Left colon (tissue), 2 donors: ENCODE measurements at regions of chr3 and their contacts with region 1.

Region 1: GRCh38 chr3:183385698-183386613 is 42.5 kb downstream of the MCF2L2 start:
- DNase-seq: peak in 1 of 2 donors; percentile 60
- ATAC-seq: peak; percentile 86

Region 2: GRCh38 chr3:183122257-183122932 is 263.6 kb before region 1 on chr3:
- intact Hi-C with region 1: loop called (anchors 5 to 10 kb)
- DNase-seq: no peak
- ATAC-seq: peak; percentile 60

Region 3: DNA sequence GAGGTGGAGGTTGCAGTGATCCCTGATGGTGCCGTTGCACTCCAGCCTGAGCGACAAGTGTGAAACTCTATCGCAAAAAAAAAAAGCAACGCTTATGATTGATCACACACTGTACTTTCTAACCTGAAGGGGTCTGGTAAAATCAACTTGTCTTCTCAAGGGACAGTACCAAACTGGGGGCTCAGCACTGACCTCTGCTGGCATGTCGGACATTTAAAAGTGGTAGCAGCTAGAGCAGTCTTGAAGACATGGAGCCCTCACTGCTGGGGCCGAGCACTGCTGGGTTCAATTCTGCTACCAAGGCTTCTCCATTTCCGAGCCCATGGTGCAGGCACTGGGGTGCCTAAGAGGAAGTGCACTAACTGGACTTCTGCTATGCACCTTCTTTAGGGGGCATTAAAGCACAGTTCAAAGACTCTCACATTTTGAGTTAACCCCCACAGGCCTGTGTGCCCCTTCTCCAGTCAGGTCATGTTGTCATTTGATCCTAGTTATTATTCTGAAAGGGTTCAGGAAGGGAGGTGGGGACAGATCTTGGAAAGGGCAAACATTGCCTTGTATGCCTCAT is 197.0 kb before region 1 on chr3:
- intact Hi-C with region 1: loop called in 1 of 2 experiments (anchors 5 kb)
- DNase-seq: peak in 1 of 2 donors; percentile 60
- ATAC-seq: peak; percentile 34

Region 4: GRCh38 chr3:183564046-183564445 is 178.1 kb after region 1 on chr3:
- intact Hi-C with region 1: no loop called
- DNase-seq: no peak
- ATAC-seq: no peak